ENCODE measurements at regions of chrX and their contacts with region 1.

Region 1: GRCh38 chrX:154748712-154749343 is 2.0 kb downstream of the GAB3 start:
- DNase-seq: no peak
- ATAC-seq: peak; percentile 77 to 86 (median 80)
- H3K4me3 ChIP-seq: peak overlapping the region; percentile 35
- H3K27ac ChIP-seq: peak overlapping the region; percentile 20
- H3K4me1 ChIP-seq: peaks cover 4% of the 10 kb centered on the region
- H3K27me3 ChIP-seq: peaks cover 0 to 2% (median 0%) of the 10 kb centered on the region in 3 donors
- CTCF ChIP-seq: peak; percentile 76

Region 2: GRCh38 chrX:154714925-154715324 is 33.9 kb before region 1 on chrX:
- intact Hi-C with region 1: loop called in 1 of 2 experiments (anchors 2 kb)
- DNase-seq: no peak
- ATAC-seq: peak; percentile 56 to 76 (median 66)
- H3K4me3 ChIP-seq: no peak overlapping the region
- H3K27ac ChIP-seq: no peak overlapping the region
- H3K4me1 ChIP-seq: no peaks in the 10 kb centered on the region
- H3K27me3 ChIP-seq: no peaks in the 10 kb centered on the region
- CTCF ChIP-seq: peak; percentile 72